CD8-positive, alpha-beta T cell (primary cell): ENCODE measurements at regions of chr11 and their contacts with region 1.

Region 1: DNA sequence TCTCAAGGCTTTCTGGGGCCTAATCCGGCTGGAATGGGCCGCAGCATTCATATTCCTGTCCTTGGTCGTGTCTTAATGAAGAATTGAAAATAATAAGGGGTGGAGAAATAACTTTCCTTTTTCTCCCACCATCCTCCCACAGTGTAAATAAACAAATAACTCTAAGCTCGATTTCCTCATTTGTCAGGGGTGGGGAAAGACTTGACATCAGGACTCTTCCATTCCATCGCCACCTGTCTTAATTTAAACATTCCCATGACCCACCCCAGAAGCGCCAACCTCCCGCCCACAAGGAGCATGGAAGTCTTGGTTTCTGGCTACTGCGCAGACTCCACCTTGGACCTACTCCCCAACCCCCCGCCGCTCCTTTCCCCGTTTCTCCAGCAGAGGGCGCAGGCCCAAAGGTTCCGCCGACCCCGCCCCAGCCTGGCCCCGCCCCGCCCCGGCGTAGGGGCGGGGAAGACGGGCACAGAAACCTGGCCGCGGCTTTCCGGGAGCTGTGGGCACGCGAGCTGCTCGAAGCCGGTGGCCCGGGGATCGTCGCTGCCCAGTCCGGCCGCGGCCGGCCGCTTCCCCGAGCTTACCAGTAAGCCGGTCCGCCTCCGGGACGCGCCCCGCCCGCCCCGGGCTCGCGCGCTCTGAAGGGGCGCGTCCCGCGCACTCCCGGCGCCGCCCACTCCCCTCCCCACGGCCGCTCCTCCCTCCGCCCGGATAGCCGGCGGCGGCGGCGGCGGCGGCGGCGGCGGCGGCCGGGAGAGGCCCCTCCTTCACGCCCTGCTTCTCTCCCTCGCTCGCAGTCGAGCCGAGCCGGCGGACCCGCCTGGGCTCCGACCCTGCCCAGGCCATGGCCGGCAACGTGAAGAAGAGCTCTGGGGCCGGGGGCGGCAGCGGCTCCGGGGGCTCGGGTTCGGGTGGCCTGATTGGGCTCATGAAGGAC is at the start of gene CBL:
- DNase-seq: peak; percentile 94 to 100 (median 98)
- ATAC-seq: peak; percentile 91
- H3K4me3 ChIP-seq: peak within 1 kb of the TSS; percentile 93 to 94
- H3K4me3 Mint-ChIP-seq: peak within 1 kb of the TSS; percentile 97
- H3K27ac ChIP-seq: peak within 1 kb of the TSS; percentile 61 to 79
- H3K27ac Mint-ChIP-seq: peak within 1 kb of the TSS; percentile 93
- H3K4me1 ChIP-seq: peaks cover 24% of the 10 kb centered on the region
- H3K4me1 Mint-ChIP-seq: peaks cover 44% of the 10 kb centered on the region
- H3K27me3 ChIP-seq: no peaks in the 10 kb centered on the region
- H3K27me3 Mint-ChIP-seq: no peaks in the 10 kb centered on the region
- CTCF ChIP-seq: peak; percentile 70
- total RNA-seq, gene CBL: 13.5 to 13.8 TPM

Region 2: GRCh38 chr11:119168471-119169281 is 37.2 kb before region 1 on chr11 and contains the start of gene NLRX1:
- CTCF ChIA-PET with region 1: interaction called, 5 read pairs
- POLR2A ChIA-PET with region 1: no interaction called
- intact Hi-C with region 1: loop called in 1 of 2 experiments (anchors 2 kb)
- DNase-seq: peak; percentile 70 to 90 (median 81)
- ATAC-seq: peak; percentile 99
- H3K4me3 ChIP-seq: peak within 1 kb of the TSS; percentile 61 to 70
- H3K4me3 Mint-ChIP-seq: peak within 1 kb of the TSS; percentile 87
- H3K27ac ChIP-seq: peak within 1 kb of the TSS; percentile 60 to 69
- H3K27ac Mint-ChIP-seq: peak within 1 kb of the TSS; percentile 81
- H3K4me1 ChIP-seq: peaks cover 6% of the 10 kb centered on the region
- H3K4me1 Mint-ChIP-seq: no peaks in the 10 kb centered on the region
- H3K27me3 ChIP-seq: no peaks in the 10 kb centered on the region
- H3K27me3 Mint-ChIP-seq: no peaks in the 10 kb centered on the region
- CTCF ChIP-seq: peak; percentile 80
- total RNA-seq, gene NLRX1: 5.1 TPM

Region 3: DNA sequence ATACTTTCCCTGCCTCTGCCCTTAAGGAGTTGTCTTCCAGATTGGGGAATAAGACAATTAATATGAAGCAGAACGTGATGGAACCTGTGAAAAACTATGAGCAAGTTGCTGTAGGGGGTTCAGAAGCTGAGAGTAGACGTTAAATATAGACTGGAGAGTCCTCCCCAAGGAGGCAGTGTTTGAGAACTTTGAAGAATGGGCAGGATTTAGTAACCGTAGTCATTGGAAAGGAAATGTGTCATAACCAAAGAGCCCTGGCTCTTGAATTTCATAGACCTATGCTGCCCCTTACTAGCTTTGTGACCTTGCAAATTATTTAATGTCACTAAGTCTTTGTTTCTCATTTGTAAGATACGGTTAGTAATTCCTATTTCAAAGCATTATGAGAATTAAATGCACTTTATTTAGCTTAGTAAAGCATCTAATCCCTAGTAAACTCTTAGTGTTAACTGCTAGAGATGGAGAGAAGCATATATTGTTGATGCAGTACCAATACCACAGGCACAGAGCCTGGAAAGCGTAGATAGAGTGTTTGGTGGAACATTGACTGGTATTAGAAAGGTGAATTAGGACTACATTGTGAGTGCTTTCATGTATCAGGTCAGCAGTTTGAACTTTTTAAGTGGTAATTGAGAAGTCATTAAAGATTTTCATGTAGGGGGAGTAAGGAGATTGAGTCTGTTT is 57.0 kb after region 1 on chr11:
- CTCF ChIA-PET with region 1: interaction called, 33 read pairs
- POLR2A ChIA-PET with region 1: interaction called, 14 read pairs
- intact Hi-C with region 1: loop called in 1 of 2 experiments (anchors 5 kb)
- DNase-seq: peak in 2 of 9 experiments; percentile 32 to 56
- ATAC-seq: peak; percentile 28
- H3K4me3 ChIP-seq: no peak overlapping the region
- H3K4me3 Mint-ChIP-seq: no peak overlapping the region
- H3K27ac ChIP-seq: peak overlapping the region in 1 of 2 experiments; percentile 77
- H3K27ac Mint-ChIP-seq: no peak overlapping the region
- H3K4me1 ChIP-seq: peaks cover 86% of the 10 kb centered on the region
- H3K4me1 Mint-ChIP-seq: peaks cover 50% of the 10 kb centered on the region
- H3K27me3 ChIP-seq: no peaks in the 10 kb centered on the region
- H3K27me3 Mint-ChIP-seq: no peaks in the 10 kb centered on the region
- CTCF ChIP-seq: no peak

Region 4: DNA sequence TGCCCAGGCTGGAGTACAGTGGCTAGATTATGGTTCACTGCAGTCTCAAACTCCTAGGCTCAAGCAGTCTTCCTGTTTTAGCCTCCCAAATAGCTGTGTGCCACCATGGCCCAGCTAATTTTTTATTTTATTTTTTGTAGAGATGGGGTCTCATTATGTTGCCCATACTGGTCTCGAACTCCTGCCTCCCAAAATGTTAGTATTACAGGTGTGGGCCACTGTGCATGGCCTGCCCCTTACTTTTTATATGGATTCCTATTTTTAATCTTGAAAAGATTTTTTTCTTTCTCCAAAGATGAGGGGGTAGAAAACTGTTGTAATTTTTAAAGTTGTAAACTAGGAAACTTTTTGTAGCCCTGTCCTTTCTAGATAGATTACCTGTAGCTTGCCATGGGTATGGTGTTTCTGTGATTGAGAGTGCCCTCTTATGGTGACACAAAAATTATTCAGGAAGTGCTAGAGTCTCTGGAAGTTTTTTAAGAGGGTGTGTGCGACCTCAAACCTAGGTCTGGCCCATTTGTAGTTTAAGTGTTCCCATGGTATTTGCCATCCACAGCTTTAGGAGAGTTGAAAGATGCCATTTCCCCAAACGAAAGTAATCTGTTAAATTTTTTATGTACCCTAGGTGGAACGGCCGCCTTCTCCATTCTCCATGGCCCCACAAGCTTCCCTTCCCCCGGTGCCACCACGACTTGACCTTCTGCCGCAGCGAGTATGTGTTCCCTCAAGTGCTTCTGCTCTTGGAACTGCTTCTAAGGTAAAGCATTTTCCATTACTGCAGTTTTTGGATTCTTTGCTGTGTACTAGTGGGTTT is 78.7 kb after region 1 on chr11:
- CTCF ChIA-PET with region 1: interaction called, 72 read pairs
- POLR2A ChIA-PET with region 1: interaction called, 13 read pairs
- intact Hi-C with region 1: loop called (anchors 1 kb)
- DNase-seq: peak in 2 of 9 experiments; percentile 62 to 78
- ATAC-seq: peak; percentile 96
- H3K4me3 ChIP-seq: no peak overlapping the region
- H3K4me3 Mint-ChIP-seq: no peak overlapping the region
- H3K27ac ChIP-seq: no peak overlapping the region
- H3K27ac Mint-ChIP-seq: peak overlapping the region; percentile 7
- H3K4me1 ChIP-seq: peaks cover 18% of the 10 kb centered on the region
- H3K4me1 Mint-ChIP-seq: peaks cover 34% of the 10 kb centered on the region
- H3K27me3 ChIP-seq: no peaks in the 10 kb centered on the region
- H3K27me3 Mint-ChIP-seq: no peaks in the 10 kb centered on the region
- CTCF ChIP-seq: peak; percentile 59

Region 5: GRCh38 chr11:119381181-119381988 is 175.5 kb after region 1 on chr11 and contains the start of gene USP2:
- CTCF ChIA-PET with region 1: no interaction called
- POLR2A ChIA-PET with region 1: no interaction called
- intact Hi-C with region 1: loop called in 1 of 2 experiments (anchors 5 kb)
- DNase-seq: peak; percentile 94 to 98 (median 97)
- ATAC-seq: peak; percentile 98
- H3K4me3 ChIP-seq: peak within 1 kb of the TSS; percentile 74 to 80
- H3K4me3 Mint-ChIP-seq: no peak within 1 kb of the TSS
- H3K27ac ChIP-seq: peak within 1 kb of the TSS; percentile 57 to 73
- H3K27ac Mint-ChIP-seq: peak within 1 kb of the TSS; percentile 21
- H3K4me1 ChIP-seq: peaks cover 16% of the 10 kb centered on the region
- H3K4me1 Mint-ChIP-seq: peaks cover 7% of the 10 kb centered on the region
- H3K27me3 ChIP-seq: peaks cover 0 to 14% of the 10 kb centered on the region in 2 experiments
- H3K27me3 Mint-ChIP-seq: no peaks in the 10 kb centered on the region
- CTCF ChIP-seq: peak; percentile 92
- total RNA-seq, gene USP2: 3.4 to 5.9 TPM